Heart right ventricle (tissue), 16 donors: ENCODE measurements at regions of chr14 and their contacts with region 1.

Region 1: DNA sequence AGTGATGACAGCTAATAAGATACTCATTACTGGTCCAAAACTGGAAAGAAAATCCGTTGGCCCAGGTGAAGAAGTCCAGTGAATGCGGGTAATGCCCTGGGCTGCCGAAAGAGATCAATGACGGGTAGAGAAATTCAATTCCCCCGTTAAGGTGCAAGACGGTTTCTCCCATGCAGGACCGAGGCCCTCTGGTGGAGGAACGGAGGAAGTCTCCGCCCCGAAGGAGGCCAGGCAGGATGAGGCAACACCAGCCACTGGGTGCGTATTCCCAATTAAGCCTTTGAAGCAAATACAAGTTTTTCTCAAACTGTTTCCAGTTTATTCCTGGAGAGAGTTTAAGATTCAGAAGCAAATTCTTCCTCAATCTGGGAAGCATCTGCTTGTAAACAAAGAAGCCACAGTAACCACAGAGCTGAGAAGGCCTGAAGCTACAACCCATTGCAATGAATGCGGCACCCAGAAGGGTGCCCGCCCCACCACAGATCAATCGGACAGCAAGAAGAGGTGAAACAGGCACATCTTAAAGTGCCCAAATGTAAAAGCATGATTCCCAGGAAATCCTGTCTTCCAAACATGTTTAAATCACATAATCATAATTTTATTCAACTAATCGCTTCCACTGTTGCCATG is 118.5 kb downstream of the TTC7B start:
- DNase-seq: peak; percentile 82 to 89
- ATAC-seq: peak; percentile 81 to 97 (median 92)
- H3K4me3 ChIP-seq: peak overlapping the region in 2 of 10 donors; percentile 7 to 35
- H3K27ac ChIP-seq: peak overlapping the region; percentile 33 to 88 (median 73)
- H3K4me1 ChIP-seq: peaks cover 13 to 47% (median 40%) of the 10 kb centered on the region in 9 donors
- H3K27me3 ChIP-seq: no peaks in the 10 kb centered on the region
- CTCF ChIP-seq: peak; percentile 93 to 98 (median 97)

Region 2: DNA sequence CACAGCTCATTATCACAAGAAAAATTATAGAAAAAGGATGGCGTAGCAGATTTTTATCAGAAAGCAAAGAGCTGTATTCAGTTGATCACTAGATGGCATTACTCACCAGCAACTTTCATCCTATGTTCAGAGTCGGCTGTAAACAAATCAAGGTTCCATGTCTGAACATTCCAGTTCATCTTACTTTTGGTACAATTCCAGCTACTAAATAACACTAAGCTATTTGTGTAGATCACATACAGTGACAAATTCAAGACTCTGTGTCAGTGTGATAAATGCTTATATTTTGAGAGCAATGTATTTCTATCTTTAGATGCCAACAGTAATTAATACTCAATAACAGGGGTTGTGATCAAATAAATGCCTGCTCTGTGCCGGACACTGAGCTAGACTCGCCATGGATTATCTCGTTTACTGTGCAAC is 396.0 kb before region 1 on chr14:
- intact Hi-C with region 1: loop called in 9 of 10 experiments (anchors 2 to 10 kb)
- DNase-seq: no peak
- ATAC-seq: peak in 7 of 8 donors; percentile 37 to 84 (median 70)
- H3K4me3 ChIP-seq: no peak overlapping the region
- H3K27ac ChIP-seq: peak overlapping the region in 9 of 10 donors; percentile 4 to 74 (median 56)
- H3K4me1 ChIP-seq: peaks cover 5 to 45% (median 22%) of the 10 kb centered on the region in 9 donors
- H3K27me3 ChIP-seq: no peaks in the 10 kb centered on the region
- CTCF ChIP-seq: peak; percentile 20 to 75 (median 58)

Region 3: DNA sequence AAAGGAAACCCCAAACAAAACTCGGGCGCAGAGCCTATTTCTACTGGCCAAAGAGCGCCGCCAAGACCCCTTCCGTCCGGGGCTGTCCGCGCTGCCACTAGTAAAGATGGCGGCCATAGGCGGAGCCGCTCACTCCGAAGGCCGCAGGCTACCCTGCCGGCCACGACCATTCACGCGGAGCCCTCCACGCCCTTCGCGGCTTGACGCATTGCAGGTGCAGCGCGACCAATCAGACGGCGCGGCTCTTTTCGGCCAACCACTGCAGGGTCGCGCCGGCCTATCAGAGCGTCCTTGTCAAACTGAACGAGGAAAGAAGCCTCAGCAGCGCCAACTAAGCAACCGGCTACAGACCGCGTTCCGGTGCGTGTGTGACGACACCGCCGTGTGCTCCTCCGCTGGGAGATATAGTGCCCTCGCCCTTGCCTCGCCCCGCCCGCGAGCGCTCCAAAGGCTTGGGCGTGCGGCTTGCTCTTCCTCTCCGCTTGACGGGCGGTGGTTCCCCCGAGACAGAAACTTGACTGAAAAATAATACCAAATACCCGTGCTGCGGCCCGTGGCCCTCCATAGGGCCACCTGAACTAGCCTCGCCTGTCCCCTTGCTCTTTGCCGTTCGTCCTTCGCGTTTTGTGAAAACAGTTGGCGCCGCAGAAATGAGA is 314.5 kb before region 1 on chr14:
- intact Hi-C with region 1: loop called in 3 of 10 experiments (anchors 5 kb)
- DNase-seq: peak; percentile 99 to 100
- ATAC-seq: peak; percentile 93 to 97 (median 97)
- H3K4me3 ChIP-seq: peak overlapping the region; percentile 44 to 75 (median 66)
- H3K27ac ChIP-seq: peak overlapping the region; percentile 95 to 100 (median 99)
- H3K4me1 ChIP-seq: peaks cover 6 to 49% (median 34%) of the 10 kb centered on the region in 9 donors
- H3K27me3 ChIP-seq: no peaks in the 10 kb centered on the region
- CTCF ChIP-seq: peak in 5 of 9 donors; percentile 8 to 33 (median 22)

Region 4: GRCh38 chr14:90518941-90519256 is 178.8 kb before region 1 on chr14:
- intact Hi-C with region 1: loop called in 1 of 10 experiments (anchors 10 kb)
- DNase-seq: no peak
- ATAC-seq: peak in 1 of 8 donors; percentile 34
- H3K4me3 ChIP-seq: no peak overlapping the region
- H3K27ac ChIP-seq: peak overlapping the region in 1 of 10 donors; percentile 1
- H3K4me1 ChIP-seq: peaks cover 25 to 67% (median 59%) of the 10 kb centered on the region in 9 donors
- H3K27me3 ChIP-seq: no peaks in the 10 kb centered on the region
- CTCF ChIP-seq: peak; percentile 9 to 68 (median 51)

Region 5: DNA sequence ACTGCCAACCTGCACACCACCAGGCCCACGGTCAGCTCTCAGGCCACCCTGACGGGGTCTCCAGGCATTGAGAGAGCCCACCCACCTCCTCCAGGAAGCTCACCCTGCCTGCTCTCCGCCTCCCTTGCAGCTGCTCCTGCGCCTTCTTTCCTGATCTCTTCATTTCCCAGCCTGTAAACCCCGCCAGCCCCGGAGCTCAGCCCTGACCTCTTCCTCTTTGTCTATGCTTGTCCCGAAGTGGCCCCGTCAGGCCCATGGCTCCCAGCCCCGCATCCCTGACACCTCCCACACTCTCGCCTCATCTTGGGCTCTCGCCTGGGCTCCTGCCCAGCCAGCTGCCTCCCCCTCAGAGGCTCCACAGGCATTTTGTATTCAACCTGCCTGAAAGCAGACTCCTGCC is 161.6 kb before region 1 on chr14:
- intact Hi-C with region 1: loop called in 1 of 10 experiments (anchors 5 kb)
- DNase-seq: peak; percentile 58 to 75
- ATAC-seq: peak; percentile 58 to 84 (median 76)
- H3K4me3 ChIP-seq: no peak overlapping the region
- H3K27ac ChIP-seq: peak overlapping the region; percentile 53 to 87 (median 79)
- H3K4me1 ChIP-seq: peaks cover 13 to 47% (median 39%) of the 10 kb centered on the region in 9 donors
- H3K27me3 ChIP-seq: no peaks in the 10 kb centered on the region
- CTCF ChIP-seq: no peak

Region 6: DNA sequence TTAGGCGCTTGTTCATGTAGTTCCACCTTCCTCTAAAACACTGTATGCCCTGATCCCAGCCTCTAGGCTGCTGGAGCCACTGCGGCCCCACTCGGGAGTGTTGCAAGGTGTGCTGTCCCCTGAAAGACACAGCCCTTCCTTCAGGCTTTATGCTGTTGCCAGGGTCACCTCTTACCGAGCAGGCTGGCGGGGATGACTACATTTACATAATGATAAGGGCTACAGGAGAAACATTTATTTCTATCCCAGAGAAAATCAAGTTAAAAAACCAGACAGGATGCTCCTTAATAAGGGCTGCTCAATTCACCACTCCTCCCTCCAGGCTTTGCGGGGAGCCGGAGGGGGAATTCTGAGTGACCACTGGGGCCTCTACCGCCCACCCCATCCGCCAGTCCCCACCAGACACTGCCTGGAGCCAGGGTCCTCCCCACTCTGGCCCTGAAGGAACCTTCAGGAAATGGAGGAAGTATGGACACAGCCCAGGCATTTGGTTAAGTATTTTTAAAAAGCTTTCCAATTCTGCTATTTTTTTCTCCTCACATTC is 82.1 kb before region 1 on chr14:
- intact Hi-C with region 1: loop called in 1 of 10 experiments (anchors 5 kb)
- DNase-seq: peak in 1 of 2 donors; percentile 46
- ATAC-seq: peak in 6 of 8 donors; percentile 69 to 85 (median 78)
- H3K4me3 ChIP-seq: peak overlapping the region in 6 of 10 donors; percentile 15 to 46 (median 31)
- H3K27ac ChIP-seq: peak overlapping the region in 9 of 10 donors; percentile 4 to 80 (median 65)
- H3K4me1 ChIP-seq: peaks cover 4 to 61% (median 53%) of the 10 kb centered on the region in 9 donors
- H3K27me3 ChIP-seq: no peaks in the 10 kb centered on the region
- CTCF ChIP-seq: no peak

Region 7: GRCh38 chr14:91038438-91038837 is 340.7 kb after region 1 on chr14:
- intact Hi-C with region 1: no loop called
- DNase-seq: no peak
- ATAC-seq: no peak
- H3K4me3 ChIP-seq: no peak overlapping the region
- H3K27ac ChIP-seq: no peak overlapping the region
- H3K4me1 ChIP-seq: peaks cover 0 to 15% (median 0%) of the 10 kb centered on the region in 9 donors
- H3K27me3 ChIP-seq: no peaks in the 10 kb centered on the region
- CTCF ChIP-seq: no peak